Calu3 (cell line): ENCODE measurements at regions of chr1 and their contacts with region 1.

Region 1: GRCh38 chr1:192747942-192748341 is 60.9 kb upstream of the RGS2 start:
- DNase-seq: peak; percentile 30
- H3K4me3 Mint-ChIP-seq: no peak overlapping the region
- H3K27ac Mint-ChIP-seq: peak overlapping the region; percentile 85
- H3K4me1 Mint-ChIP-seq: peaks cover 24% of the 10 kb centered on the region
- H3K27me3 Mint-ChIP-seq: no peaks in the 10 kb centered on the region
- CTCF ChIP-seq: no peak

Region 2: GRCh38 chr1:192633533-192634253 is 114.2 kb before region 1 on chr1:
- CTCF ChIA-PET with region 1: no interaction called
- intact Hi-C with region 1: loop called (anchors 5 kb)
- DNase-seq: no peak
- H3K4me3 Mint-ChIP-seq: no peak overlapping the region
- H3K27ac Mint-ChIP-seq: no peak overlapping the region
- H3K4me1 Mint-ChIP-seq: peaks cover 35% of the 10 kb centered on the region
- H3K27me3 Mint-ChIP-seq: no peaks in the 10 kb centered on the region
- CTCF ChIP-seq: no peak

Region 3: DNA sequence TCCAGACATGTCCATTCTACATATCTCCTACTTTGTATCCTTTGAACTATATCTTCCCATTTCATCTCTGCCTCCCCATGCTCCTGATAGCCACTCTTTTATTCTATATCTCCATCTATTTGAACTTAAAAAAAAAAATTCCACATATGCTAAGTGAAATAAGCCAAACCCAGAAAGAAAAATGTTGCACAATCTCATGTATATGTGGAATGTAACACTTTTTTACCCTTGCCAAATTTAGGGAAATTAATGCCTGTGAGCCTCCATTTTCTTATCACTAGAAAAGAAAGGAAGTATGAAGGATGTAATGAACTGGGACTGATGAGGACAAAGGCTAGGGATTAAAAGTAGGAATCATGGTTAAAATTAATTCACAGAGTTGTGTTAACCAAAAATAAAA is 58.5 kb before region 1 on chr1:
- CTCF ChIA-PET with region 1: no interaction called
- intact Hi-C with region 1: no loop called
- DNase-seq: no peak
- H3K4me3 Mint-ChIP-seq: no peak overlapping the region
- H3K27ac Mint-ChIP-seq: no peak overlapping the region
- H3K4me1 Mint-ChIP-seq: no peaks in the 10 kb centered on the region
- H3K27me3 Mint-ChIP-seq: no peaks in the 10 kb centered on the region
- CTCF ChIP-seq: no peak

Region 4: DNA sequence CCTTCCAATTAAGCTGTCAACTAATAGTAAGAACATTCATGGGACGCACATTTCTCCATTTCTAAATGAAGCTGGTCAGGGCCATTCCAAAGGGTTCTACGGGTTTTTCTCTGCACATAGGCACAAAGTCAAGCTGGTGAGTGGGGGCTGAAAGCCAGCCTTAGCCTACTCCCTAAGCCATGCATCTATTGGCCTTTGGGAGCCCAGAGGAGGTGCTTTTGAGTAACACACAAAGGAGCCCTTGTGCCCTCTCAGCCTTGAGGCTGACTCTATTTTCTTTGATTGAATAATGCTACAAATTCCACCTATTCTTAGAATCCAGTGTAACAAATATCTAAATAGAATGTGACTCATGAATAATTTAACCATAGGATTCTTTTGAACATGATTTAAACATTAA is 38.4 kb before region 1 on chr1:
- CTCF ChIA-PET with region 1: no interaction called
- intact Hi-C with region 1: loop called (anchors 2 kb)
- DNase-seq: peak; percentile 56
- H3K4me3 Mint-ChIP-seq: no peak overlapping the region
- H3K27ac Mint-ChIP-seq: no peak overlapping the region
- H3K4me1 Mint-ChIP-seq: no peaks in the 10 kb centered on the region
- H3K27me3 Mint-ChIP-seq: no peaks in the 10 kb centered on the region
- CTCF ChIP-seq: no peak